WTC11 (cell line): ENCODE measurements at regions of chr6 and their contacts with region 1.

Region 1: DNA sequence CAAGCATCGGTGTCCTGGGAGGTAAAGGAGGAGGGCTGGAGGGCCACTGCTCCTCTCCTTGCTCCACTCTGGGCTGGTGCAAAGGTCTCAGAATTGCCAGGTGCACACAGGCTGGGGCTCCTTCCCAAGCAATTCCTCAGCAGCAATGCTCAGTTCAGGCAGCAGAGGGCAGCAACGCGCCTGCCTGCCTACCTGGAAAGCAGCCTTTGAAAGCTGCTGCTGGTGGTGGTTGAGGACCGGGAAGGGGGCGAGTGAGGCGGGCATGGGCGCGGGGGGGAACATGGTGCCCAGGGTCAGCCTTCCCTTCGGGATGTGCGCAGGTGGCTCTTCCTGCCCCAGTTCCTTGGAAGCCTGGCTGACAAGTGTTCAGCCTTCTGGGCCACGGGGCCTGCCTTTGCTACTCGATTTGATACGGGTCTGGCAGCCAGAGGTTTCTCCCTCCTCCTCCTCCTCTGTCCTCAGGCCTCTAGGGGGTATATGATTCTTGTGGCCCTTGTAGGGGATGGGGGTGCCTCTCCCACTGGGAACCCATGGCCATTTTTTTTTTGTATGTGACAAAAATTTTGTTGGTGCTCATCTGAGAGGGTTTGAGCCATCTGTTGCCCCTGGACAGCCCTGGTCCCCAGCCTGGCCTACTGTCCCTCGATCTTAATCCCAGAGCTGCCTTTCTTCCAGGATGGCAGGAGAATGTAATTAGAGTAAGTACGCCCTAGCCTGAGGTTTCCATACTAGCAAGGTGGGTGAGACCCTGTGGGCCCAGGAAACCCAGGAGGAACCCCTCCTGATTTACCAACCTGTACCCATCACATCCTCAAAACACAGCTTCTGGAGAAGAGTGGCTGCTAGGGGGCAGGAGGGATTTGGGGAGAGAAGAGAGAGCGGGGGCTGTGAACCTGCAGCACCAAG is 20.1 kb downstream of the MRPS18A start:
- DNase-seq: peak; percentile 88
- ATAC-seq: peak; percentile 63
- H3K4me3 Mint-ChIP-seq: peak overlapping the region; percentile 55
- H3K27ac Mint-ChIP-seq: peak overlapping the region; percentile 7; the same call in 1 of the 2 replicates
- H3K4me1 Mint-ChIP-seq: peaks cover 36% of the 10 kb centered on the region
- H3K27me3 Mint-ChIP-seq: peaks cover 9% of the 10 kb centered on the region
- CTCF ChIP-seq: peak; percentile 81

Region 2: DNA sequence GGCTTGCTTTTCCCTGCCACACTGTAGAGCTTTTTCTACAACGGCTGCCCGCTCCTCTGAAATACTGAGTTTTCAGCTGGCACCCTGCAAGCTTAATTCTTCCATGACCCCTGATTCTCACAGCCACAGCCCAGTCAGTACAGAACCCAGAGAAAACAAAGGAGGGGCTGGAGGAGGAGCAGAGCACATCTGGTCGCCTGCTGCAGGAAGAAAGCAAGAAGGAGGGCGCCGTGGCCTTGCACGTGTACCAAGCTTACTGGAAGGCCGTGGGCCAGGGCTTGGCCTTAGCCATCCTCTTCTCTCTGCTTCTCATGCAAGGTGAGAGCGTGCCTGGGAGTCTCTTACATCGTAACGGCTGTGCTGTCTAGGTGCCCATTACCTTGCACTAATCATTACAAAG is 223.5 kb before region 1 on chr6:
- CTCF ChIA-PET with region 1: no interaction called
- POLR2A ChIA-PET with region 1: no interaction called
- DNase-seq: no peak
- ATAC-seq: no peak
- H3K4me3 Mint-ChIP-seq: no peak overlapping the region
- H3K27ac Mint-ChIP-seq: no peak overlapping the region
- H3K4me1 Mint-ChIP-seq: no peaks in the 10 kb centered on the region
- H3K27me3 Mint-ChIP-seq: no peaks in the 10 kb centered on the region
- CTCF ChIP-seq: no peak

Region 3: DNA sequence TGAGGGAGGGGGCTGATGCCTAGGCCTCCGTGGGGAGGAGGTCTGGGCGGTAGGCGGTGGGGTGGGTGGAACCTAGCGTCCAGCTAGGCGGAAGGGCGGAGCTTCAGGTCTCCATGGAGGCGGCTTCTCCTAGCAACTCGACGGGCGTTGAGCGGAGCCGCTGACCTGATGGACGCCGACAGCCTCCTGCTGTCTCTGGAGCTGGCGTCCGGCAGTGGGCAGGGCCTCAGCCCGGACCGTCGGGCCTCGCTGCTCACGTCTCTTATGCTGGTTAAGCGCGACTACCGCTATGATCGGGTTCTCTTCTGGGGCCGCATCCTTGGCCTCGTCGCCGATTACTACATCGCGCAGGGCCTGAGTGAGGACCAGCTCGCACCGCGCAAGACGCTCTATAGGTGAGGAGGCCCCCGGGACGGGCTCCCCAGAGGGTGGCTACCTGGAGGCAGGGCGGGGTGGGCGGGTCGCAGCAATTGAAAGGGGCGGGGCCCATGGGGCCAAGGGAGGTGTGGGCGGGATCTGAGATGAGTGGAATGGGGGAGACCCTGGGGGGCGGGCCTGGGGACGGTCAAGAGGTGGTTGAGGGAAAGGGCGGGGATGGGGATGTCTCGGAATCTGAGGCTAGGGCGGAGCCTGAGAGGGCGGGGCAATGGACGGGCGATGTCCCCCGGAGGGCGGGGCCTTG is 22.4 kb before region 1 on chr6 and contains the start of gene RSPH9:
- CTCF ChIA-PET with region 1: interaction called, 45 read pairs
- POLR2A ChIA-PET with region 1: no interaction called
- DNase-seq: peak; percentile 99
- ATAC-seq: peak; percentile 94
- H3K4me3 Mint-ChIP-seq: peak within 1 kb of the TSS; percentile 76
- H3K27ac Mint-ChIP-seq: peak within 1 kb of the TSS; percentile 99
- H3K4me1 Mint-ChIP-seq: peaks cover 15% of the 10 kb centered on the region
- H3K27me3 Mint-ChIP-seq: peaks cover 3% of the 10 kb centered on the region; the same call in 1 of the 2 replicates
- CTCF ChIP-seq: no peak
- total RNA-seq, gene RSPH9: 0.16 to 0.35 TPM (median 0.32 TPM) in 3 replicates

Region 4: DNA sequence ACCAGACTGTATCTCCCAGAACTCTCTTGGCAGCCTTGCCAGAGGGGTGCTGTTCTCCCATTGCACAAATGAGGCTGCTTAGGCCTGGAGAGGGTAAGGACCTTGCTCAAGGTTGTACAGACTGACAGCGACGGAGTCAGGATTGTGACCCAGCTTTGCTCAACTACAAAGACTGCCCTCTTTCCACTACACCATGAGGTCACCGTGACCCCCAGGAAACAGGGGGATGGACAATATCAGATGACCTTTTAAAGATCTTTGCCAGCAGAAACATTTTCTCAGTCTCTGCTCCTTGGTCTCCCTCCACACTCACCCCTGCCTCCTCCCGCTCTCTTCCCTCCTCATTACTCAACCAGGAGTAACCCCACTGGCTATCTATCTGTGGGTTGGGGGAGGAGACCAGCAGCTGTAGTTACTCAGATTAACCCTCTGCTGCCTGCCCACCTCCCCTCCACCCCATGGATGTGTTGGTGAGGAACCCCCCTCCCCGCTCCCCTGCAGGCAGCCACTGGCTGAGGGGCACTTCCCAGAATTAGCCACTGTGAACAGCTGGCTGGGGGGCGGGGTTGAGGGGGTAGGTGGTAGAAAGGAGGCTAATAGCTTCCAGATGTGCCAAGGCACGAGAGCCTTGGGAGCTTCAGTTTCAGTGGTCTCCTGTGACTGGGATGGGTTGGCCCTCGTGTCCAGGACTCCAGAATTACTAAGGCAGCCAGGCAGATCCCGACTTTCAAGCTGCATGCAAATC is 47.0 kb after region 1 on chr6:
- CTCF ChIA-PET with region 1: interaction called, 11 read pairs
- POLR2A ChIA-PET with region 1: interaction called, 4 read pairs
- DNase-seq: no peak
- ATAC-seq: peak; percentile 25; the same call in 1 of the 2 replicates
- H3K4me3 Mint-ChIP-seq: no peak overlapping the region
- H3K27ac Mint-ChIP-seq: no peak overlapping the region
- H3K4me1 Mint-ChIP-seq: peaks cover 24% of the 10 kb centered on the region
- H3K27me3 Mint-ChIP-seq: no peaks in the 10 kb centered on the region; the same call in 1 of the 2 replicates
- CTCF ChIP-seq: no peak

Region 5: GRCh38 chr6:43758617-43759050 is 91.1 kb after region 1 on chr6:
- CTCF ChIA-PET with region 1: interaction called, 60 read pairs
- POLR2A ChIA-PET with region 1: interaction called, 6 read pairs
- DNase-seq: peak; percentile 90
- ATAC-seq: peak; percentile 97
- H3K4me3 Mint-ChIP-seq: no peak overlapping the region
- H3K27ac Mint-ChIP-seq: no peak overlapping the region
- H3K4me1 Mint-ChIP-seq: peaks cover 21% of the 10 kb centered on the region
- H3K27me3 Mint-ChIP-seq: no peaks in the 10 kb centered on the region; the same call in 1 of the 2 replicates
- CTCF ChIP-seq: peak; percentile 63

Region 6: DNA sequence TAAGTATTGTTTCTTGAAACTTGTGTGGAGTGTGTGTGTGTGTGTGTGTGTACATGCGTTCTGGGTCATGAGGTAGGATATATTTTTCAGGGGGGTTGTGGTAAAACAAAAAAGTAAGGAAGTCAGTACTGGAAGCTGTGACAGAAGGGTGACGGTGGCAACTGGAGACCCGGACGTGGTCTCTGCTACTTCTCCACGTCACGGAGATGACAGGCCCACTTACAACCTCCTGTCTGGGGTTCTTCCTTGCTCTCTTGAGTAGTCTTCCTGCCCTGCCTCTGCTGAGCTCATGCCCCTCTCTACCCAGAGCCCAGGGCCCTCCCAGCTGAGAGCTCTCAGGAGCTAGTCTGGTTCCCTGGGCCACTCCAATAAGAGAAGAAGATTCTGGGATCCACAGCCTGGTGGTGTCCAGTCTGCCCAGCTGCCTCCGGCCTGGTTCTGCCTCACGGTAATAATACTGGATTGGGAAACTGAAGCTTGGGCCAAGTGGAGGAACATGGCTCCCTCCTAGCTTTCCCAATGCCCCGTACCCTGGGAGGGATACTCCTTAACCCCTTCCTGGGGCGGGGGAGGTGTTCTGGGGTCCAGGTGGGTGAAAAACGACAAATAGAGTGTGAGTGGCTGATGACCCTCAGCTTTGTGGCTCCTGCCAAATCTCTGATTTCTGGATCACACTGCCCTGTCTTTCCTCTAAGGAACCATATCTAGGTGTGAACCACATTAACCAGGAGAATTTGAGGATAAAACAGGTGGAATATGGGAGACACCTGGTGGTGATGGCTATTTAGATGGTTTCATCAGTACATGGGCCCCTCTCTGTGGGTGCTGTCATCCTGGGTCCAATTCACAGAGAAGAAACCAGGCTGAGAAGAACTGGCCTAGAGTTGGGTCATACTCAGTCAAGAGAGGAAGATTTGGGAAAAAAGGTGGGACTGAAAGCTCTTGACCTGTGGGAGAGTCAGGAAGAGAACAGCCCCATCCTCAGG is 129.7 kb after region 1 on chr6:
- CTCF ChIA-PET with region 1: interaction called, 24 read pairs
- POLR2A ChIA-PET with region 1: no interaction called
- DNase-seq: no peak
- ATAC-seq: no peak
- H3K4me3 Mint-ChIP-seq: no peak overlapping the region
- H3K27ac Mint-ChIP-seq: no peak overlapping the region
- H3K4me1 Mint-ChIP-seq: no peaks in the 10 kb centered on the region
- H3K27me3 Mint-ChIP-seq: no peaks in the 10 kb centered on the region
- CTCF ChIP-seq: no peak

Region 7: GRCh38 chr6:45344900-45345299 is 1677.4 kb after region 1 on chr6:
- CTCF ChIA-PET with region 1: no interaction called
- POLR2A ChIA-PET with region 1: no interaction called
- DNase-seq: no peak
- ATAC-seq: no peak
- H3K4me3 Mint-ChIP-seq: no peak overlapping the region
- H3K27ac Mint-ChIP-seq: no peak overlapping the region
- H3K4me1 Mint-ChIP-seq: peaks cover 9% of the 10 kb centered on the region; the same call in 1 of the 2 replicates
- H3K27me3 Mint-ChIP-seq: no peaks in the 10 kb centered on the region
- CTCF ChIP-seq: no peak